ENCODE measurements at regions of chr3 and their contacts with region 1.

Region 1: DNA sequence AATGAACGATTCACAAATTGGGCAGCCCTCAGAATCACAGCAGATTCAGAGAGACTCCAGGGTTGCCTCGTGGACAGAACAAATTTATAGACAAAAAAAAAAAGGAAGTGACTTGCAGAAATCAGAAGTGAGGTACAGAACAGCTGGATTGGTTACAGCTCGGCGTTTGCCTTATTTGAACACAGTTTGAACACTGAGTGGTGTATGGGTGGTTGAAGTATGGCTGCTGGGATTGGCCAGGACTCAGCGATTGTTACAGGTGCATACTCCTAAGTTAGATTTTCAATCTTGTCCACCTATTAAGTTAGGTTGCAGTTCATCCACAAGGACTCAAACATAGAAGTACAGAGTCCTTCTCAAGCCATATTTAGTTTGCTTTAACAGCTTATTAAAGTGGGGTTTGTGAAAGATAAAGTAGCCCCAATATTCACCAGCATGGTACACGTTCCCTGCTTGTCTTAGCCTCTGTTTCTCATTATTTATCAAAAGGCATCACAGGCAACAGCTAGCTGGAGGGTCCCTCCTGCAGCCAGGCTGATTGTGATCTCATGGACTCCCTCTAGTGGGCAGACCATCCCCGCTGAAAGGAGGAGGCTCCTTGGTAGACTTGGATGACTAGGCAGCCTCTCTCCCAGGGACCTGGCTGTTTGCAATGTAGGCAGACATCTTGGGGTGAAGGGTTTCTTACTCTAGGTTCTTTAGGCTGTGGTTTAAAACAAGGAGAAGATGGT is 17.6 kb upstream of the ALDH1L1 start:
- DNase-seq: peak in 1 of 2 experiments; percentile 81
- H3K4me3 ChIP-seq: no peak overlapping the region
- H3K27ac ChIP-seq: no peak overlapping the region
- H3K4me1 ChIP-seq: no peaks in the 10 kb centered on the region
- H3K27me3 ChIP-seq: no peaks in the 10 kb centered on the region; a peak in 1 of 7 replicates
- CTCF ChIP-seq: peak; percentile 75 to 85 (median 79)
- EP300 ChIP-seq: no peak
- POLR2A ChIP-seq: no peak
- RAD21 ChIP-seq: peak; percentile 69 to 78

Region 2: DNA sequence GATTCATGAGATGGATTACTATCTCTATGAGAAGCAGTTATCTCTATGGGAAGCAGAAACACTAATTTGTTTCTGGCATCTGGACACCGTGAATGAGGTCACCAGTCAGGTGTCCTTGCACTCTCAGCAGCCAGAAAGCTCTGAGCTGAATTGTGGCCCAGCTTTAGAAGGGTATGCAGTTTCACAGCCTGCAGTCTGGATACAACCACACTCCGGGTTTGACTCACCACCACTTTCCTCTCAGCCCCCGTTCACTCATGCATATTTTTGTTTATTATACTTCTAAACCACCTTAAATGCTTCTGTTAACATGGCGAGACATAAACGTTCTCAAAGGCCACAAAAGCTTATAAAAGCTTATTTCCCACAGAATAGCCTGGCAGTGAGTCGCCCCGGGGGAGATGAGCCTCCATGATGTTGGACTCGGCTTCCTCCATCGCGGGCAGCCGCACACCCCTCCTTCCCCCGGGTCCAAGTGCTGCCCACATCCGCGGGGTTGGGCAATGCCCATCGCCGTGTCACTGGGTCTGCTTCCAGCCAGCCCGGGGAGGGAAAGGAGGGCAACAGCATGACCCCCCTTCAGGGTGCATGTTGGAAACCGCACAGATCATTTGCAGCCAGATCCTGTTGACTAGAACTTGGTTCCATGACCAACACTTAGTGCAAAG is 97.3 kb before region 1 on chr3:
- CTCF ChIA-PET with region 1: no interaction called
- POLR2A ChIA-PET with region 1: no interaction called
- DNase-seq: no peak
- H3K4me3 ChIP-seq: no peak overlapping the region
- H3K27ac ChIP-seq: no peak overlapping the region
- H3K4me1 ChIP-seq: no peaks in the 10 kb centered on the region; a peak in 1 of 7 replicates
- H3K27me3 ChIP-seq: no peaks in the 10 kb centered on the region
- CTCF ChIP-seq: no peak
- EP300 ChIP-seq: no peak
- POLR2A ChIP-seq: no peak
- RAD21 ChIP-seq: no peak

Region 3: GRCh38 chr3:126146525-126147146 is 51.4 kb before region 1 on chr3:
- CTCF ChIA-PET with region 1: interaction called, 29 read pairs
- POLR2A ChIA-PET with region 1: no interaction called
- DNase-seq: no peak
- H3K4me3 ChIP-seq: no peak overlapping the region
- H3K27ac ChIP-seq: no peak overlapping the region
- H3K4me1 ChIP-seq: no peaks in the 10 kb centered on the region
- H3K27me3 ChIP-seq: no peaks in the 10 kb centered on the region
- CTCF ChIP-seq: no peak
- EP300 ChIP-seq: no peak
- POLR2A ChIP-seq: no peak
- RAD21 ChIP-seq: no peak

Region 4: GRCh38 chr3:126170073-126170777 is 27.8 kb before region 1 on chr3:
- CTCF ChIA-PET with region 1: no interaction called
- POLR2A ChIA-PET with region 1: no interaction called
- DNase-seq: no peak
- H3K4me3 ChIP-seq: no peak overlapping the region
- H3K27ac ChIP-seq: no peak overlapping the region
- H3K4me1 ChIP-seq: peaks cover 0 to 5% (median under 1%) of the 10 kb centered on the region in 4 experiments; a peak in 2 of 7 replicates
- H3K27me3 ChIP-seq: no peaks in the 10 kb centered on the region
- CTCF ChIP-seq: no peak
- EP300 ChIP-seq: no peak
- POLR2A ChIP-seq: no peak
- RAD21 ChIP-seq: no peak

Region 5: GRCh38 chr3:126180477-126181397 is 17.3 kb before region 1 on chr3 and contains the start of gene ALDH1L1:
- CTCF ChIA-PET with region 1: interaction called, 35 read pairs
- POLR2A ChIA-PET with region 1: interaction called, 3 read pairs
- DNase-seq: peak; percentile 34 to 84
- H3K4me3 ChIP-seq: peak within 1 kb of the TSS; percentile 35 to 85 (median 56)
- H3K27ac ChIP-seq: no peak within 1 kb of the TSS
- H3K4me1 ChIP-seq: peaks cover 0 to 3% (median 0%) of the 10 kb centered on the region in 4 experiments; a peak in 1 of 7 replicates
- H3K27me3 ChIP-seq: peaks cover 2 to 34% (median 25%) of the 10 kb centered on the region in 4 experiments
- CTCF ChIP-seq: no peak
- EP300 ChIP-seq: no peak
- POLR2A ChIP-seq: peak in 1 of 2 experiments; percentile 36; a peak in 1 of 3 replicates
- RAD21 ChIP-seq: no peak
- total RNA-seq, gene ALDH1L1: 1.6 TPM in 2 replicates

Region 6: GRCh38 chr3:126186271-126186670 is 11.7 kb before region 1 on chr3:
- CTCF ChIA-PET with region 1: interaction called, 35 read pairs
- POLR2A ChIA-PET with region 1: no interaction called
- DNase-seq: no peak
- H3K4me3 ChIP-seq: no peak overlapping the region
- H3K27ac ChIP-seq: no peak overlapping the region
- H3K4me1 ChIP-seq: peaks cover 0 to under 1% (median 0%) of the 10 kb centered on the region in 4 experiments; a peak in 1 of 7 replicates
- H3K27me3 ChIP-seq: peaks cover 2 to 13% (median 8%) of the 10 kb centered on the region in 4 experiments
- CTCF ChIP-seq: no peak
- EP300 ChIP-seq: no peak
- POLR2A ChIP-seq: no peak
- RAD21 ChIP-seq: no peak

Region 7: GRCh38 chr3:126212602-126213378 is 14.8 kb after region 1 on chr3:
- CTCF ChIA-PET with region 1: interaction called, 39 read pairs
- POLR2A ChIA-PET with region 1: interaction called, 3 read pairs
- DNase-seq: peak; percentile 43 to 85
- H3K4me3 ChIP-seq: peak overlapping the region; percentile 37 to 68 (median 58)
- H3K27ac ChIP-seq: no peak overlapping the region
- H3K4me1 ChIP-seq: peaks cover 0 to 12% (median 8%) of the 10 kb centered on the region in 4 experiments; a peak in 6 of 7 replicates
- H3K27me3 ChIP-seq: peaks cover 0 to 13% (median 10%) of the 10 kb centered on the region in 4 experiments; a peak in 5 of 7 replicates
- CTCF ChIP-seq: peak; percentile 41 to 66 (median 54)
- EP300 ChIP-seq: peak in 1 of 2 experiments; percentile 55; a peak in 1 of 3 replicates
- POLR2A ChIP-seq: peak in 1 of 2 experiments; percentile 42; a peak in 1 of 3 replicates
- RAD21 ChIP-seq: peak; percentile 39 to 60; a peak in 3 of 4 replicates

Measured in H1 (cell line).